Sciatic nerve (tissue), 2 donors: ENCODE measurements at regions of chr11 and their contacts with region 1.

Region 1: DNA sequence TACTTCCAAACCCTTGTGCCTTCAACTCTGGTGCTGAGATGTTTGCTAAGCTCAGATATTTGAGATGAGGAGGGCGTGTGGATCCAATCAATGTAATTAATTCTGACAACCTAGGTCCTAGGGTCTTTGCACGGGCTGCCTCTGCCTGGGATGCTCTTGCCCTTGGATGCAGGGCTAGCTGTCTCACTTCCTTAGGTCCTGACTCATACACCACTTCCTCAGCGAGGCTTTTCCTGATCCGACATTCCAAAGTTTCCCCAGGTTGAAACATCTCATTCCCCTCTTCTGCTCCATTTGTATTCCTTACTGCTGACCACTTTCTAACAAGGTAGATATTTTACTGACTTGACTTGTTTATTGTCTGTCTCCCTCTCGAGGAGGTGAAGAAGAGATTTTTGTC is 43.0 kb upstream of the NTM start:
- DNase-seq: no peak
- ATAC-seq: no peak

Region 2: GRCh38 chr11:131365319-131365930 is 38.0 kb after region 1 on chr11:
- intact Hi-C with region 1: no loop called
- DNase-seq: no peak
- ATAC-seq: no peak

Region 3: DNA sequence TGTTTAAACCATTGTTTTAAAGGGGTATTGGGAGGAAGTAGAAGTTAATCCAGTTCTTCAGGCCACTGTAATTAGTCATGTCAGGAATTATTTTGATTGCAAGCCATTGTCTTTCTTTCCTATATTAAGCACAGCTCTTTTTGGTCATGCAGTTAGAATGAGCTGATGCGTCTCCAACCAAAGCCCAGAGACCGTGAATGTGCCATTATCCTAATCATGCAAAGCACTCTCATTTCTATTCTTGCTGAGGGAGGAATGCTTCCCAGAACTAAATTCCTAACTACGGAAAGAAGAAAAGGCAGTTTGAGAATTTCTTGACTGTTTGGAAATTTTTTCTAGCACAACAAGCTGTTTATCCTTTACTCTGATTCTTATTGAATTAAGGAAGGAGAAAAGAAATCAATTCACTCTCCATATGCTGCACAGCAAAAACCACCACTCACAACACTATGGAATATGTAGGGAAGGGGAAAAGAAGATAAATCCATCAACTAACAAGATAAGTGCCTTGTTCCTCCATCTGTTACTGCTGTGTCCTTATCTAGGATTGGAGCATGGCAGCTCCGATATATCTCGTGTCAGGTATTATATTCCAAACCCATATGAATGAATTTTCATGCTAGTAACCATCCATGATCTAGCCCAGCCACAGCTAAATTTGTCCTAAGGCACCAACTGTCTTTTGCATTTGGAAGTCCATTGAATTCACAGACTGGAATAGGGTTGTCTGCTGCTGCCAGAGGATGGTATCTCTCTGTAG is 113.8 kb after region 1 on chr11:
- intact Hi-C with region 1: loop called (anchors 2 kb)
- DNase-seq: no peak
- ATAC-seq: no peak